Activated CD8-positive, alpha-beta memory T cell treated with anti-CD3 and anti-CD28 coated beads, Interleukin-2, amount 10 ng/mL, durations not matched to agents 7 days and 5 days (primary cell): ENCODE measurements at regions of chr16 and their contacts with region 1.

Region 1: GRCh38 chr16:20874088-20874581 is 26.0 kb downstream of the DCUN1D3 start:
- DNase-seq: no peak
- ATAC-seq: peak; percentile 5
- H3K4me3 Mint-ChIP-seq: peak overlapping the region; percentile 66
- H3K27ac Mint-ChIP-seq: peak overlapping the region; percentile 98
- H3K4me1 Mint-ChIP-seq: peaks cover 89% of the 10 kb centered on the region
- H3K27me3 Mint-ChIP-seq: no peaks in the 10 kb centered on the region

Region 2: DNA sequence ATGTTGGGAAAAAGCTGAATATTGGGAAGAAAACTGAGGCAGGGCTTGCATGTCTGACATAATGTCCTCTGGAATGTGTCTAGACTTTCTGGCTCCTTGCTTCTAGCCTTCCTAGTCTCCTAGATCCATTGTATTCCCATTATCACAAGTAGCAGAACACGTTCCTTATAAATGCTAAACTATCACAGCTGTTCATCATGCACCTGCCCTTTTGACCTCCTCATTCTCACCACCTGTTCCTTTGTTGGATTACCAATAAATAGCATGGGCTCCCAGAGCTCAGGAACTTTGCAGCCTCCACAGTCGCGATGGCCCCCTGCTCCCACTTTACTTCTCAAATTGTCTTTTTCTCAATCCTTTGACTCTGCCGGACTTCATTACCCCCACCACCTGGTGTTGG is 226.4 kb before region 1 on chr16:
- CTCF ChIA-PET with region 1: no interaction called
- DNase-seq: no peak
- ATAC-seq: no peak
- H3K4me3 Mint-ChIP-seq: no peak overlapping the region
- H3K27ac Mint-ChIP-seq: no peak overlapping the region
- H3K4me1 Mint-ChIP-seq: no peaks in the 10 kb centered on the region
- H3K27me3 Mint-ChIP-seq: peaks cover 5% of the 10 kb centered on the region

Region 3: DNA sequence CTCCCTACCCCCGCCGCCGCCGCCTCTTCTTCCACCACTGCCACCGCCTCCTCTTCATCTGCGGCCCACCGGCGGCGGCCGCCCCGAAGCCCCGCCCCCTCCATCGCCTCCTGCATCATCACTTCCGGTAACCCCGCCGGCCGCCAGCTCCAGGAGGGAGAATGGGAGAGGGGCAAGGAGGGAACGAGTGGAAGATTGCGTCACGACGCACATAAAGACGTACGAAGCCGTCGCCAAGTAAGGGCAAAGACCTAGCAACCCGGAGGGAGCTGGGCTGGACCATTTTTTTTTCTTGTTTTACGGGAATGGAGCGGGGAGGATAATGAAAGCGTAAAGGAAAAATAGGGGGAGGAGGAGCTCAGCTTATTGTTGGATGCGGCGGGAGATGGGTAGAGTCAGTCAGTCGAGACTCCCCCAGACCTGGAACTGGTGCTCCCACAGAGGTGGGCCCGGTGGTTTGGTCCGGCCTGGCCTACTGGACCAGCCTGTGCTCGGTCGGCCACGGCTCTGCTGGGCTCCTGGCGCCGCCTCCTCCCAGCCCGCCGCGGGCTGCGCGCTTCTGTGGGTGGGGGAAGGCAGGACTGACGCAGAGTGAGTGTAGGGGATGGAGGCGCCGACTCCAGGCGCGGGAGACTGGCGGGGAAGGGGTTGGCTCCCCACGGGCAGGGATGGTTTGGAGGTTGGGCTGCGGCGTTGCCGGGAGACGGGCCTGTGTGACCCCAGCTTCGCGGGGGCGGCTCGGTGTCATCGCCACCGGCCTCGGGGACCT is 26.3 kb after region 1 on chr16 and contains the starts of genes DCUN1D3 and LYRM1:
- CTCF ChIA-PET with region 1: interaction called, 24 read pairs
- DNase-seq: peak; percentile 95
- ATAC-seq: peak; percentile 78
- H3K4me3 Mint-ChIP-seq: peak within 1 kb of the TSS; percentile 97
- H3K27ac Mint-ChIP-seq: peak within 1 kb of the TSS; percentile 99
- H3K4me1 Mint-ChIP-seq: peaks cover 75% of the 10 kb centered on the region
- H3K27me3 Mint-ChIP-seq: no peaks in the 10 kb centered on the region
- total RNA-seq, gene DCUN1D3: 18.1 to 24.4 TPM
- total RNA-seq, gene LYRM1: 38.6 to 47.7 TPM

Region 4: GRCh38 chr16:20910781-20911321 is 36.7 kb after region 1 on chr16:
- CTCF ChIA-PET with region 1: interaction called, 19 read pairs
- DNase-seq: no peak
- ATAC-seq: peak; percentile 73
- H3K4me3 Mint-ChIP-seq: peak overlapping the region; percentile 45
- H3K27ac Mint-ChIP-seq: peak overlapping the region; percentile 82
- H3K4me1 Mint-ChIP-seq: peaks cover 70% of the 10 kb centered on the region
- H3K27me3 Mint-ChIP-seq: no peaks in the 10 kb centered on the region

Region 5: GRCh38 chr16:20944861-20945574 is 70.9 kb after region 1 on chr16:
- CTCF ChIA-PET with region 1: interaction called, 13 read pairs
- DNase-seq: peak; percentile 93
- ATAC-seq: peak; percentile 79
- H3K4me3 Mint-ChIP-seq: no peak overlapping the region
- H3K27ac Mint-ChIP-seq: peak overlapping the region; percentile 88
- H3K4me1 Mint-ChIP-seq: peaks cover 54% of the 10 kb centered on the region
- H3K27me3 Mint-ChIP-seq: no peaks in the 10 kb centered on the region